PC-3 (cell line): ENCODE measurements at regions of chr14 and their contacts with region 1.

Region 1: DNA sequence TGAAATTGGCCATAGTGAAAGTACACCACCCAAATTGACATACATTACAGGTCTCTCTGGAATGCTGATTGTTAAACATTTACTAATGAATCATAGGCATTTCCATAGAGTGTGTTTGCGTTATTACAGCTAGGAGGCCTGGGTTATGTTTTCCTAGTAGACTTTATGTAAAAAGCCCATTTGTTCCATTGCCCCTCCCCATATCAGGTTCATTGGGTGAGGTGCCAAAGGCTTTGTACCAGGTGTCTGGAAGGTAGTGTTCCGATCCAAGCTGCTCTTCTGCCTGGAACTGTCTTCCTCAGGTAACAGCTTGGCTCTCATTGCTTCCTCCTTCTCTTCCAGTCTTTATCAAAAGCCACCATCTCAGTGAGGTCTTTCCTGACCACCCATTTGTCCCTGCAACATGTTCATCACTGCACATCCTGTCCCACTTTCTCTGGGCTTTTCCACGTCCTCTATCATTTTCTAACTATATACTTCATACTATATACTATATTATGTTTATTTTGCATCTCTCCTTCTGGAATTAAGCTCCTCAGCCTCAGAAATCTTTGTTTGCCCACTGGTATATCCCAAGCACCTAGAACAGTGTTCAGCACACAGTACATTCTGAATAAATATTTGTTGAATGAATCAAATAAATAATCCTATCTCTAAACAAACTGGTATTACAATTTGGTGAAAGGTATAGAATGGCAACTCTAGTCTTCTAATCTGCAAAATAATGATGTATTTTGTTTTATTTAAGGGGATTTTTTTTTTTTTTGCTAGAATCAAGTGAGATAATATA is 252.3 kb downstream of the KTN1 start:
- DNase-seq: peak; percentile 100
- ATAC-seq: peak; percentile 96
- H3K4me3 ChIP-seq: peak overlapping the region; percentile 31
- H3K27ac ChIP-seq: peak overlapping the region; percentile 91
- H3K4me1 ChIP-seq: peaks cover 40% of the 10 kb centered on the region
- H3K27me3 ChIP-seq: no peaks in the 10 kb centered on the region
- CTCF ChIP-seq: no peak

Region 2: DNA sequence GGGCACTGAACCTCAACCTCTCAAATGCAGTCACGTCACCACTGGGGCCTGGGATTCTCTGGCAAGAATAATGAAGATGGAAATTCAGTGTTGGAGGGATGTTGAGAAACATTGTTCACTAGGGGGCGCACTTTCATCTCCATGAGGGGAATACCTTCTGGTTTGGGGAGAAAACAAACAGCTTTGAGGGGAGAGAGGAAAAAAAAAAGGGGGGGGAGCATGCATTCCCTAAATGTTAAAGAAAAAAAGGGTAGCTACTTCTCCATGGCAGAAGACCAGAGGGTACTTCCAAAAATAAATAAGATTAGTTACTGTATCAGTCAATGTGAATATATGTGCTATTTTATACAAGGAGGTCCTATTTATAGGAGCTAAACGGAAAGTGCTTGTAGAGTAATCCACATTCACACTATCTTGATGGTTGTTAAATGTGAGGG is 386.1 kb before region 1 on chr14:
- CTCF ChIA-PET with region 1: no interaction called
- POLR2A ChIA-PET with region 1: no interaction called
- intact Hi-C with region 1: loop called (anchors 5 kb)
- DNase-seq: peak; percentile 99
- ATAC-seq: peak; percentile 7
- H3K4me3 ChIP-seq: peak overlapping the region; percentile 22; the same call in 1 of the 2 replicates
- H3K27ac ChIP-seq: peak overlapping the region; percentile 81
- H3K4me1 ChIP-seq: peaks cover 54% of the 10 kb centered on the region
- H3K27me3 ChIP-seq: no peaks in the 10 kb centered on the region
- CTCF ChIP-seq: peak; percentile 99

Region 3: GRCh38 chr14:55701638-55702037 is 130.7 kb before region 1 on chr14:
- CTCF ChIA-PET with region 1: no interaction called
- POLR2A ChIA-PET with region 1: no interaction called
- intact Hi-C with region 1: no loop called
- DNase-seq: peak; percentile 91
- ATAC-seq: peak; percentile 28; the same call in 1 of the 2 replicates
- H3K4me3 ChIP-seq: no peak overlapping the region
- H3K27ac ChIP-seq: peak overlapping the region; percentile 9
- H3K4me1 ChIP-seq: peaks cover 53% of the 10 kb centered on the region
- H3K27me3 ChIP-seq: no peaks in the 10 kb centered on the region
- CTCF ChIP-seq: no peak

Region 4: GRCh38 chr14:55739960-55740648 is 92.2 kb before region 1 on chr14:
- CTCF ChIA-PET with region 1: no interaction called
- POLR2A ChIA-PET with region 1: no interaction called
- intact Hi-C with region 1: loop called (anchors 1 kb)
- DNase-seq: peak; percentile 71
- ATAC-seq: peak; percentile 75
- H3K4me3 ChIP-seq: no peak overlapping the region
- H3K27ac ChIP-seq: no peak overlapping the region
- H3K4me1 ChIP-seq: peaks cover 15% of the 10 kb centered on the region
- H3K27me3 ChIP-seq: no peaks in the 10 kb centered on the region
- CTCF ChIP-seq: no peak

Region 5: GRCh38 chr14:55794655-55795595 is 37.4 kb before region 1 on chr14:
- CTCF ChIA-PET with region 1: no interaction called
- POLR2A ChIA-PET with region 1: no interaction called
- intact Hi-C with region 1: loop called (anchors 2 kb)
- DNase-seq: peak; percentile 92
- ATAC-seq: peak; percentile 70
- H3K4me3 ChIP-seq: no peak overlapping the region
- H3K27ac ChIP-seq: peak overlapping the region; percentile 30
- H3K4me1 ChIP-seq: peaks cover 36% of the 10 kb centered on the region
- H3K27me3 ChIP-seq: no peaks in the 10 kb centered on the region
- CTCF ChIP-seq: no peak

Region 6: GRCh38 chr14:55846826-55847446 is 14.6 kb after region 1 on chr14:
- CTCF ChIA-PET with region 1: no interaction called
- POLR2A ChIA-PET with region 1: interaction called, 5 read pairs
- intact Hi-C with region 1: loop called (anchors 1 kb)
- DNase-seq: peak; percentile 55
- ATAC-seq: peak; percentile 40
- H3K4me3 ChIP-seq: no peak overlapping the region
- H3K27ac ChIP-seq: peak overlapping the region; percentile 56
- H3K4me1 ChIP-seq: peaks cover 32% of the 10 kb centered on the region
- H3K27me3 ChIP-seq: no peaks in the 10 kb centered on the region
- CTCF ChIP-seq: no peak

Region 7: DNA sequence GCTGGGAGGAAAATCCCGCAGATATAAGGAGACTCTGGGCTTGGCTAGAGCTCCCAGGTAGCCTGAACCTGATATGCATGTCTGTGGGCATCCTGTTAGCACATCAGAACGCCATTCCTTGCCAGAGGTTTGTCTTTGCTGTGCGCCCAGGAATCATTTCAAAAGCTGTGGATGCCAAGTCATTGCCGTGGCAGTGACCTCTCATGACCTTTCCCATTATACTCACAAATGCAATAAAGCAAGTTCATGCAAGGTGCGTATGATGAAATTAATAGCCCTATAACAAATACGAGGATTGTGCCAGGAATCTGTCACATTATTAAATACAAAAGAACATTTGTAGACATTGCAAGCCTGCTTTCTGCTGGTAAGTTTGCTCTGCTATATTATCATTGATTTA is 56.8 kb after region 1 on chr14:
- CTCF ChIA-PET with region 1: interaction called, 4 read pairs
- POLR2A ChIA-PET with region 1: no interaction called
- intact Hi-C with region 1: loop called (anchors 1 kb)
- DNase-seq: peak; percentile 89
- ATAC-seq: peak; percentile 76
- H3K4me3 ChIP-seq: no peak overlapping the region
- H3K27ac ChIP-seq: no peak overlapping the region
- H3K4me1 ChIP-seq: peaks cover 8% of the 10 kb centered on the region; the same call in 1 of the 2 replicates
- H3K27me3 ChIP-seq: peaks cover 52% of the 10 kb centered on the region
- CTCF ChIP-seq: no peak

Region 8: GRCh38 chr14:55957950-55958349 is 125.6 kb after region 1 on chr14:
- CTCF ChIA-PET with region 1: no interaction called
- POLR2A ChIA-PET with region 1: no interaction called
- intact Hi-C with region 1: no loop called
- DNase-seq: no peak
- ATAC-seq: no peak
- H3K4me3 ChIP-seq: no peak overlapping the region
- H3K27ac ChIP-seq: no peak overlapping the region
- H3K4me1 ChIP-seq: no peaks in the 10 kb centered on the region
- H3K27me3 ChIP-seq: peaks cover 87% of the 10 kb centered on the region
- CTCF ChIP-seq: no peak